Naive thymus-derived CD4-positive, alpha-beta T cell (primary cell): ENCODE measurements at regions of chrX and their contacts with region 1.

Region 1: DNA sequence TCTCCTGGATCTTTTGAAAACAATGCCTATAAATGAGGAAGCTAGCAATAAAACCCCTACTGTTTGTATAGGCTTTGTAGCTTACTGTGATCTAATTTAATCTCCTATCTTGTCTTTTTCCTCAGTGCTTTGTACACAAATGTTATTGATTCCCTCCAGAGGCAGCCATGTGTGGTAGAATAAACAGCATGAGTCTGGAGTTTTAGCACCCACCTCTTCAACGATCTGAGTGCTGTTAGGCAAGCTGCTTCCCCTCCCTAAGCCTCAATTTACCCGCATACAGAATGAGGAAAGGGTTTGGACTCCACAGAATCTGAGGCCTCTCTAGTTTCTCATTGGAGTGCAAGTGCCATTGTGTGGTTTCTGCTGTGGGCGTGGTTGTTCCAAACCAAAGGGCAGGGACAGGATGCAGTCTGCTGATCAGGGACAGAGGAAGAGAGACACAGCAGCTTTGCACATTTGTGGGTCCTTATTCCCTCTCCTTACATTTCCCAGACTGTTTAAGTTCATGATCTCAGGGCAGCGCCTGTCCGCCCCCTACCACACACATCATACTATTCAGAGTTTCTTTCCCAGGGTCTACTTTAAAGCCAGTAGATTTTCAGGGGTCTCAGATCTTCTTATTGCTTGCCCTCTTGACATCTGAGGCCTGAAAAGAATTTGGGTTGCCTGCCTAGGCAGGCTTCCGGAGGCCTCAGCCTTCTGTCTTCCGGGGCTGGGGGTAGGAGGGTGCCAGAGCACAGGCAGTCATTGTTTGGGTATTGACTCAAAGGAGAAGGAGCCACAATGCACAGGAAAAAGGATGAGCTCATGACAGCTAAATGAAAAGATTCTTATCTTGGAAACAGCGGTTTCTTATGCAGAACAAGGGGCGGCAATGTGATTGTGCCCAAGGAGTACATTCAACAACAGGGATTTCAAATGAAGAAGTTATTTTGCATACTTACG is 114.9 kb upstream of the TEX13D start:
- DNase-seq: peak; percentile 11 to 84 (median 78)
- ATAC-seq: peak; percentile 97
- H3K4me3 ChIP-seq: peak overlapping the region; percentile 46
- H3K4me3 Mint-ChIP-seq: peak overlapping the region; percentile 56 to 82 (median 76)
- H3K27ac ChIP-seq: peak overlapping the region; percentile 72
- H3K27ac Mint-ChIP-seq: peak overlapping the region; percentile 76 to 98 (median 93)
- H3K4me1 ChIP-seq: peaks cover 52 to 62% of the 10 kb centered on the region in 2 donors
- H3K4me1 Mint-ChIP-seq: peaks cover 40 to 95% (median 84%) of the 10 kb centered on the region in 7 donors
- H3K27me3 ChIP-seq: no peaks in the 10 kb centered on the region
- H3K27me3 Mint-ChIP-seq: no peaks in the 10 kb centered on the region

Region 2: GRCh38 chrX:123949846-123950245 is 267.7 kb before region 1 on chrX:
- CTCF ChIA-PET with region 1: no interaction called
- POLR2A ChIA-PET with region 1: no interaction called
- intact Hi-C with region 1: no loop called
- DNase-seq: no peak
- ATAC-seq: no peak
- H3K4me3 ChIP-seq: no peak overlapping the region
- H3K4me3 Mint-ChIP-seq: no peak overlapping the region
- H3K27ac ChIP-seq: no peak overlapping the region
- H3K27ac Mint-ChIP-seq: no peak overlapping the region
- H3K4me1 ChIP-seq: no peaks in the 10 kb centered on the region
- H3K4me1 Mint-ChIP-seq: no peaks in the 10 kb centered on the region
- H3K27me3 ChIP-seq: no peaks in the 10 kb centered on the region
- H3K27me3 Mint-ChIP-seq: no peaks in the 10 kb centered on the region

Region 3: DNA sequence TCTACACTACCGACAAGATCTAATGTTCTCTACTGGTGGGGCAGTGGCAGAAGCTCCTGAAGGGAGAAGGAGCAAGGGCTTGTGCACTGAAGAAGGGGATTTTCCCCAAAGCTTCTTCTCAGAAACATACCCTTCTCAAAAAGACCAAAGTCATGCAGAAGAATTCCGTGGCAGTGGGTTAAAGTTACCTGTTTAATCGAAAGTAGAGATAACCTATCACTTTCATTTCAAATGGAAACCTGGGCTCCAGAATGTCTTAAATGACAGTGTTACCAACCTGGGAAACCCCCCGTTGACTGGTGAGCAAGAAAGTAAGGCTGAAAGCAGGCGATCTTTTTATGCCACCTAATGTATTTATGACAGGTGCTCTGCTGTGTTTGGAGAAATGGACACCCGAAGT is 22.3 kb after region 1 on chrX:
- CTCF ChIA-PET with region 1: interaction called, 3 read pairs
- POLR2A ChIA-PET with region 1: no interaction called
- intact Hi-C with region 1: loop called (anchors 1 to 2 kb)
- DNase-seq: peak in 3 of 9 donors; percentile 15 to 54 (median 35)
- ATAC-seq: peak; percentile 58
- H3K4me3 ChIP-seq: no peak overlapping the region
- H3K4me3 Mint-ChIP-seq: peak overlapping the region in 7 of 10 donors; percentile 12 to 60 (median 54)
- H3K27ac ChIP-seq: no peak overlapping the region
- H3K27ac Mint-ChIP-seq: peak overlapping the region in 3 of 9 donors; percentile 8 to 66 (median 34)
- H3K4me1 ChIP-seq: peaks cover 0 to 7% of the 10 kb centered on the region in 2 donors
- H3K4me1 Mint-ChIP-seq: peaks cover 8 to 47% (median 35%) of the 10 kb centered on the region in 7 donors
- H3K27me3 ChIP-seq: no peaks in the 10 kb centered on the region
- H3K27me3 Mint-ChIP-seq: peaks cover 0 to 2% (median 0%) of the 10 kb centered on the region in 5 donors

Region 4: GRCh38 chrX:124274438-124275181 is 57.0 kb after region 1 on chrX:
- CTCF ChIA-PET with region 1: no interaction called
- POLR2A ChIA-PET with region 1: no interaction called
- intact Hi-C with region 1: loop called in 1 of 2 experiments (anchors 5 kb)
- DNase-seq: no peak
- ATAC-seq: no peak
- H3K4me3 ChIP-seq: no peak overlapping the region
- H3K4me3 Mint-ChIP-seq: no peak overlapping the region
- H3K27ac ChIP-seq: no peak overlapping the region
- H3K27ac Mint-ChIP-seq: peak overlapping the region in 2 of 9 donors; percentile 9 to 38
- H3K4me1 ChIP-seq: peaks cover 0 to 16% of the 10 kb centered on the region in 2 donors
- H3K4me1 Mint-ChIP-seq: peaks cover 0 to 7% (median 2%) of the 10 kb centered on the region in 7 donors
- H3K27me3 ChIP-seq: no peaks in the 10 kb centered on the region
- H3K27me3 Mint-ChIP-seq: no peaks in the 10 kb centered on the region

Region 5: GRCh38 chrX:124338733-124339514 is 121.3 kb after region 1 on chrX:
- CTCF ChIA-PET with region 1: interaction called, 3 read pairs
- POLR2A ChIA-PET with region 1: interaction called, 10 read pairs
- intact Hi-C with region 1: loop called in 1 of 2 experiments (anchors 1 kb)
- DNase-seq: peak in 7 of 9 donors; percentile 34 to 70 (median 49)
- ATAC-seq: peak; percentile 86
- H3K4me3 ChIP-seq: no peak overlapping the region
- H3K4me3 Mint-ChIP-seq: peak overlapping the region in 2 of 10 donors; percentile 6 to 27
- H3K27ac ChIP-seq: no peak overlapping the region
- H3K27ac Mint-ChIP-seq: peak overlapping the region in 8 of 9 donors; percentile 54 to 88 (median 78)
- H3K4me1 ChIP-seq: peaks cover 38 to 51% of the 10 kb centered on the region in 2 donors
- H3K4me1 Mint-ChIP-seq: peaks cover 8 to 58% (median 42%) of the 10 kb centered on the region in 7 donors
- H3K27me3 ChIP-seq: no peaks in the 10 kb centered on the region
- H3K27me3 Mint-ChIP-seq: no peaks in the 10 kb centered on the region

Region 6: GRCh38 chrX:124736553-124737240 is 519.1 kb after region 1 on chrX:
- CTCF ChIA-PET with region 1: no interaction called
- POLR2A ChIA-PET with region 1: no interaction called
- intact Hi-C with region 1: loop called in 1 of 2 experiments (anchors 5 kb)
- DNase-seq: peak; percentile 15 to 78 (median 65)
- ATAC-seq: peak; percentile 88
- H3K4me3 ChIP-seq: peak overlapping the region; percentile 41
- H3K4me3 Mint-ChIP-seq: peak overlapping the region; percentile 70 to 83 (median 79)
- H3K27ac ChIP-seq: peak overlapping the region; percentile 39
- H3K27ac Mint-ChIP-seq: peak overlapping the region; percentile 81 to 93 (median 86)
- H3K4me1 ChIP-seq: peaks cover 10 to 17% of the 10 kb centered on the region in 2 donors
- H3K4me1 Mint-ChIP-seq: peaks cover 10 to 57% (median 45%) of the 10 kb centered on the region in 7 donors
- H3K27me3 ChIP-seq: no peaks in the 10 kb centered on the region
- H3K27me3 Mint-ChIP-seq: no peaks in the 10 kb centered on the region